HepG2 (cell line): ENCODE measurements at regions of chr7 and their contacts with region 1.

Region 1: DNA sequence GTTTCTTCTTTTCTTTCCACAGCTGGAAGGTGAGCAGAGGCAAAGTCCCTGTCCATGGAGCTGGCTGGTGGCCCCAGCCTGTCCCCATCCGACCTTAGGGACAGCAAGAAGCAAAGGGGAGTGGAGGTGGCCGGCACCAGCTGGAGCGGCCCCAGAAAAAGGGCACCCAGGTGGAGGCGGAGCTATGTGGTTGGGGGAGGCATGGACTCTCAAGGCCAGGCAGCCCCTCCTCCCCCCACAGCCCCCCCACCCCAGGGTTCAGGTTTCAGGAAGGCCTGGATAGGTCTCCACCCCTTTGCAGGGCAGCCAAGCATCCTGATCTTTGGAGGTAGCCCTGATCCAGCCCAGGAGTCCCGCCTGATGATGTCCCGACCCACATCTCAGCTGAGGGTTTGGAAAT is at the start of gene SSC4D:
- DNase-seq: peak; percentile 83
- ATAC-seq: peak; percentile 86
- H3K4me3 ChIP-seq: peak within 1 kb of the TSS; percentile 62 to 77 (median 64)
- H3K27ac ChIP-seq: peak within 1 kb of the TSS; percentile 66
- H3K4me1 ChIP-seq: peaks cover 43% of the 10 kb centered on the region
- H3K27me3 ChIP-seq: no peaks in the 10 kb centered on the region
- CTCF ChIP-seq: no peak
- EP300 ChIP-seq: peak in 1 of 2 experiments; percentile 33; a peak in 1 of 4 replicates
- POLR2A ChIP-seq: peak; percentile 57 to 63
- RAD21 ChIP-seq: no peak
- total RNA-seq, gene SSC4D: 32.3 and 63.8 TPM in 2 replicates

Region 2: DNA sequence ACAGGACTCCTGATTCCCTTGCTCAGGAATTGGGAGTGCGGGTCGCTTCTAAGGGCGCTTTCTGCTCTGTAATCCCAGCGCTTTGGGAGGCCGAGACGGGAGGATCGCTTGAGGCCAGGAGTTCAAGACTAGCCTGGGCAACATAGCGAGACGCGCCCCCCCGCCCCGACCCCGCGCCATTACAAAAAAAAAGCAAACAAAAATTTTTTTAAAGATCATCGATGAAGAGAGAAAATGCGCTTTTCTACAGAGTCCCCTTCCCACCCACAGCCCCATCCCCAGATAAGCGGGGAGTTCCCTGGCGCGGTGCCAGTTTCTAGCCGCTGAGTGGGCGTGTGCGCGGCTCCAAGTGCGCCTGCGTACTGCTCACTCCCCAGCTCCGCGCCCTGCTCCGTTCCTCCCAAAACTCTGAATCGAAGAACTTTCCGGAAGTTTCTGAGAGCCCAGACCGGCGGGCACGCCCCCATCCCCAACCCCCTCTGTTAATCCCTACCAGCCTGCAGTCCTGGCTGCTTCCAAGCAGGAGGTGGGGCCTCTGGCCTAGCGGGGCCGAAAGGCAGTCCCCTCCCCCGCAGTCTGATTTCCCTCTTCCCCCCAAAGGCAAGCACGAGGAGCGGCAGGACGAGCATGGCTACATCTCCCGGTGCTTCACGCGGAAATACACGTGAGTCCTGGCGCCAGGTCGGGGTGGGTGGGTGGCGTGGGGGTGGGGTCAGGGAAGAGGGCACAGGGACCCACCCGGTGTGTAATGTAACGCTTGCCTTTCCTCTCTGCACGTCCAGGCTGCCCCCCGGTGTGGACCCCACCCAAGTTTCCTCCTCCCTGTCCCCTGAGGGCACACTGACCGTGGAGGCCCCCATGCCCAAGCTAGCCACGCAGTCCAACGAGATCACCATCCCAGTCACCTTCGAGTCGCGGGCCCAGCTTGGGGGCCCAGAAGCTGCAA is 106.1 kb before region 1 on chr7:
- CTCF ChIA-PET with region 1: no interaction called
- POLR2A ChIA-PET with region 1: no interaction called
- in situ Hi-C with region 1: no loop called
- intact Hi-C with region 1: no loop called
- DNase-seq: peak; percentile 86
- ATAC-seq: peak; percentile 59
- H3K4me3 ChIP-seq: peak overlapping the region; percentile 62 to 81 (median 64)
- H3K27ac ChIP-seq: peak overlapping the region; percentile 23
- H3K4me1 ChIP-seq: peaks cover 72% of the 10 kb centered on the region
- H3K27me3 ChIP-seq: no peaks in the 10 kb centered on the region
- CTCF ChIP-seq: no peak; the same call in 1 of the 2 replicates
- EP300 ChIP-seq: peak in 1 of 2 experiments; percentile 42; a peak in 1 of 4 replicates
- POLR2A ChIP-seq: peak in 1 of 2 experiments; percentile 44; a peak in 1 of 4 replicates
- RAD21 ChIP-seq: no peak

Region 3: GRCh38 chr7:76328389-76328788 is 81.1 kb before region 1 on chr7:
- CTCF ChIA-PET with region 1: no interaction called
- POLR2A ChIA-PET with region 1: no interaction called
- in situ Hi-C with region 1: no loop called
- intact Hi-C with region 1: no loop called
- DNase-seq: no peak
- ATAC-seq: no peak
- H3K4me3 ChIP-seq: no peak overlapping the region
- H3K27ac ChIP-seq: no peak overlapping the region
- H3K4me1 ChIP-seq: peaks cover 13% of the 10 kb centered on the region
- H3K27me3 ChIP-seq: no peaks in the 10 kb centered on the region
- CTCF ChIP-seq: no peak
- EP300 ChIP-seq: no peak
- POLR2A ChIP-seq: no peak
- RAD21 ChIP-seq: no peak

Region 4: GRCh38 chr7:76359111-76359978 is 50.2 kb before region 1 on chr7:
- CTCF ChIA-PET with region 1: no interaction called
- POLR2A ChIA-PET with region 1: interaction called, 10 read pairs
- in situ Hi-C with region 1: no loop called
- intact Hi-C with region 1: no loop called
- DNase-seq: peak; percentile 97
- ATAC-seq: peak; percentile 93
- H3K4me3 ChIP-seq: peak overlapping the region; percentile 92 to 99 (median 94)
- H3K27ac ChIP-seq: peak overlapping the region; percentile 93
- H3K4me1 ChIP-seq: peaks cover 47% of the 10 kb centered on the region
- H3K27me3 ChIP-seq: no peaks in the 10 kb centered on the region; a peak in 1 of 5 replicates
- CTCF ChIP-seq: peak; percentile 95
- EP300 ChIP-seq: peak; percentile 50 to 69; a peak in 3 of 4 replicates
- POLR2A ChIP-seq: peak; percentile 70 to 84
- RAD21 ChIP-seq: peak; percentile 83

Region 5: DNA sequence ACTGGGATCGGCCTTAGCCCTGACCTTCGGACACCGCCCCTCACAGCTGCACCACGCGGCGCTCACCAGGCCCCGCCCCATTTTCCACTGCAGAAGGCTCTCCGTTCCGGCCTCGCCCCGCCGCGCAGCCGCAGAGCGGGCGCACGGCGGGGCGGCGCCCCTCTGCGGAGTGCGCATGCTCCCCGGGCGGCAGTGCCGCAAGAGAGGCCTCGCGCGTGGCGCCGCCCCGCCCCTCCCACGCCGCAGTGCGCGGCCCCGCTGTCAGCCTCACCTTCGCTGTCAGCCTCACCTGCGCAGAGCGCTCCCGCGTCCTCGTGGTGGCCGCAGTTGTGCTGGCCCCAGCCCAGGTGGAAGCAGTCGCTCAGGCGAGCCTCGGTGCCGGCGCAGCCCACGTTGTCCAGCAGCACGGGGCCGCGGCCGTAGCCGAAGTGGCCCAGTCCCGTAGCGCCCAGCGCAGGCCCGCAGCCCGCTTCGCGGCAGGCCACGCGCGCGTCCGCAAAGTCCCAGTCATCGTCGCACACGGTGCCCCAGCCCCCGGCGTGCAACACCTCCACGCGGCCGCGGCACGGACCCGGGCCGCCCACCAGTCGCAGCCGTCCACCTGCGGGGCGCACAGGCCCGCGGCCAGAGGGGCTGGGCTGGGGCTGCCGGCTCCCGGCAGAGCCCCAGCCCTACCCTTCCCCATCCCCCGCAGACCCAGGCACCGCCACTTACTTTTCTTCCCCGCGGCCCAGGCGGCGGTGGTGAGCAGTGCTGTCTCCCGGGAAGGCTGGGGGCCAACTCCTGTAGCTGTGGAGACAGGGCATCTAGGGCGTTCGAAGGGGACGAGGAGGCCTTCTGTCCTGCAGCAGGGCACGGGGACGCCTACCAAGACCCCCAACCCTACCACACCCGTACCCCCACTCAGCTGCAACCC is 16.2 kb before region 1 on chr7:
- CTCF ChIA-PET with region 1: no interaction called
- POLR2A ChIA-PET with region 1: interaction called, 25 read pairs
- in situ Hi-C with region 1: no loop called
- intact Hi-C with region 1: no loop called
- DNase-seq: peak; percentile 89
- ATAC-seq: peak; percentile 81
- H3K4me3 ChIP-seq: peak overlapping the region; percentile 56 to 79 (median 68); a peak in 5 of 6 replicates
- H3K27ac ChIP-seq: peak overlapping the region; percentile 84
- H3K4me1 ChIP-seq: peaks cover 55% of the 10 kb centered on the region
- H3K27me3 ChIP-seq: no peaks in the 10 kb centered on the region
- CTCF ChIP-seq: peak; percentile 32
- EP300 ChIP-seq: 0 out of 4 replicates have a peak, but pooled peaks of 1 of the 2 experiments have one; percentile 14
- POLR2A ChIP-seq: peak; percentile 54 to 91
- RAD21 ChIP-seq: peak; percentile 61